ENCODE measurements at regions of chr1 and their contacts with region 1.

Region 1: DNA sequence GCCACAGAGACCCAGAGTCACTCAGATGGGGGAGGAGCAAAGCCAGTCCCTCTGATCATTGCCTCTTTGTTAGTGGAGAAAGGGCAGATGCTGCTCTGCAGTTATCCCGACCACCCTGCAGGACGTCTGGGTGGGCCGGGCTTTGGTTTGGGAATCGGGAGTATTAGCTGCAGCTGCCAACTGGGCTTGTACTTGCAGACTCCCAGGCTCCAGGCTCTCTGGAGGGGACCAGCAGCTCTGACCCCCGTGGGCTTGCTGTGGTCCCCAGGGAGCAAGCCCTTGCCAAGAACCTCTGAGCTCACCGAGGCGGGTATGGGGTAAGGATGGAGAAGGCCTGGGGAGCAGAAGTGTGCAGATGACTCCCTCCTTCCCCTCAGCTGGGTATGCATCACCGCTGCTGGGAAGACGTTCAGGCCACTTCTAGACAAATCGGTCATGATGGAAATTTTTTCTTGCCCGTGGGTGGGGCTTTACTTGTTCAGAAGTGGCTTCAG is 21.6 kb downstream of the MAPKAPK2 start:
- DNase-seq: peak in 2 of 4 donors; percentile 28 to 56
- ATAC-seq: peak; percentile 40
- H3K4me3 ChIP-seq: no peak overlapping the region
- H3K27ac ChIP-seq: peak overlapping the region in 1 of 4 donors; percentile 15
- H3K4me1 ChIP-seq: peaks cover 83% of the 10 kb centered on the region
- H3K27me3 ChIP-seq: no peaks in the 10 kb centered on the region
- CTCF ChIP-seq: no peak
- POLR2A ChIP-seq: no peak

Region 2: DNA sequence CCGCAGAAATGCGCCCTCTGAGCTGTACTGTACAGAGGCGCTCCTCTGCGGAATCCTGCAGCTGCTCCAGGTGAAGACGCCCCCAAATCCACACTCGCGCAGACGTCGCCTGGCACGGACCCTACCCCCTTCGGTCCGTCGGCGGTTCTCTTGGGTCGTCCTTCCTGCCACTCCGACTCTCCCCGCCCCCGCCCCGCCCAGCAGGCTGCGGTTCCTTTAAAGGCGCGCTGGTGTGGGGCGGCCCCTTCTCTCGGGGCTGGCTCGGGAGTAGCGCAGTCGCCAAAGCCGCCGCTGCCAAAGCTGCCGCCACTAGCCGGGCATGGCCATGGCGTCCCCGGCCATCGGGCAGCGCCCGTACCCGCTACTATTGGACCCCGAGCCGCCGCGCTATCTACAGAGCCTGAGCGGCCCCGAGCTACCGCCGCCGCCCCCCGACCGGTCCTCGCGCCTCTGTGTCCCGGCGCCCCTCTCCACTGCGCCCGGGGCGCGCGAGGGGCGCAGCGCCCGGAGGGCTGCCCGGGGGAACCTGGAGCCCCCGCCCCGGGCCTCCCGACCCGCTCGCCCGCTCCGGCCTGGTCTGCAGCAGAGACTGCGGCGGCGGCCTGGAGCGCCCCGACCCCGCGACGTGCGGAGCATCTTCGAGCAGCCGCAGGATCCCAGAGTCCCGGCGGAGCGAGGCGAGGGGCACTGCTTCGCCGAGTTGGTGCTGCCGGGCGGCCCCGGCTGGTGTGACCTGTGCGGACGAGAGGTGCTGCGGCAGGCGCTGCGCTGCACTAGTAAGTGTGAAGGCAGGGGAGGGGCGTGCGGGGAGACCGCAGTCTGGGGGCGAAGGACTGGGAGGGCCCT is 198.8 kb before region 1 on chr1 and contains the start of gene RASSF5:
- intact Hi-C with region 1: no loop called
- DNase-seq: peak; percentile 92 to 94 (median 93)
- ATAC-seq: peak; percentile 91
- H3K4me3 ChIP-seq: peak within 1 kb of the TSS; percentile 56 to 59
- H3K27ac ChIP-seq: peak within 1 kb of the TSS; percentile 59 to 81 (median 74)
- H3K4me1 ChIP-seq: peaks cover 63% of the 10 kb centered on the region
- H3K27me3 ChIP-seq: no peaks in the 10 kb centered on the region
- CTCF ChIP-seq: no peak
- POLR2A ChIP-seq: peak; percentile 94 to 95 (median 95)
- total RNA-seq, gene RASSF5: 21.5 to 35.9 TPM

Region 3: GRCh38 chr1:206784471-206784903 is 78.1 kb after region 1 on chr1:
- intact Hi-C with region 1: loop called (anchors 10 kb)
- DNase-seq: no peak
- ATAC-seq: no peak
- H3K4me3 ChIP-seq: no peak overlapping the region
- H3K27ac ChIP-seq: no peak overlapping the region
- H3K4me1 ChIP-seq: no peaks in the 10 kb centered on the region
- H3K27me3 ChIP-seq: no peaks in the 10 kb centered on the region
- CTCF ChIP-seq: no peak
- POLR2A ChIP-seq: no peak